OCI-LY7 (cell line): ENCODE measurements at regions of chr3 and their contacts with region 1.

Region 1: DNA sequence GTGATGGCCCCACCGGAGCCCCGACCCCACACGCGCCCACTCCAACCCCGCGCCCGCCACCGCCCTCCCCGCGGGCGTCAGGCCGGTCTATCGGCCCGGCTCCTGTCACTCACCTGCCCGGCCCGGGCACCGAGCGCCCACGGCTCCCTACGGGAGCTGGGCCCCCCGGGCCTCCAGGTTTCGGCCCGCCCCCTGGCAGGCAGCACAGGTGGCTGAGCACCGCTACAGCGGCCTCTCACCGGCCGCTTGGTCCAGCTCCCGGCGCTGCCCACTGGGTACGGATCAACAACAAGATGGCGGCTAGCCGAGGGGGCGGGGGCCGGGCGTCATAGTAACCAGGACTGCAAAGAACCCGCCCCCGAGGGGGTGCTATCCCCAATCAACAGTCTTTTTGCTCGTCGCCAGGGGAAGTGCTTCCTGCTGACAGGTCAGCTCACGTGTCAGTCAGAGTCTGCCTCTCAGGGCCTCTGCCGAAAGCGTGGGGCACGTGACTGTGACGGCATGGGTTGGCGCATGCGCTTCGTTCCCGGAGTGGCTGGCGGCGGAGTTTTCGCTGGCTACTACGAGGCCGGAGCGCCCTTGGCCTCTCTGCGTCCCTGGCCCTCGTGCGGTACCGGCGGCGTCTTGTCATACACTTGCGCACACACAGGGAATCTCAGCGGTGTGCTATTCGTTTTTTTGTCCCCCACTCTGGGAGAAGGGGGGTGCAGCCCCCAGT is at the start of gene IP6K1:
- DNase-seq: peak; percentile 100
- H3K4me3 ChIP-seq: peak within 1 kb of the TSS; percentile 82
- H3K27ac ChIP-seq: peak within 1 kb of the TSS; percentile 14
- H3K4me1 ChIP-seq: peaks cover 32% of the 10 kb centered on the region
- CTCF ChIP-seq: no peak
- total RNA-seq, gene IP6K1: 23.1 and 27.4 TPM in 2 replicates

Region 2: DNA sequence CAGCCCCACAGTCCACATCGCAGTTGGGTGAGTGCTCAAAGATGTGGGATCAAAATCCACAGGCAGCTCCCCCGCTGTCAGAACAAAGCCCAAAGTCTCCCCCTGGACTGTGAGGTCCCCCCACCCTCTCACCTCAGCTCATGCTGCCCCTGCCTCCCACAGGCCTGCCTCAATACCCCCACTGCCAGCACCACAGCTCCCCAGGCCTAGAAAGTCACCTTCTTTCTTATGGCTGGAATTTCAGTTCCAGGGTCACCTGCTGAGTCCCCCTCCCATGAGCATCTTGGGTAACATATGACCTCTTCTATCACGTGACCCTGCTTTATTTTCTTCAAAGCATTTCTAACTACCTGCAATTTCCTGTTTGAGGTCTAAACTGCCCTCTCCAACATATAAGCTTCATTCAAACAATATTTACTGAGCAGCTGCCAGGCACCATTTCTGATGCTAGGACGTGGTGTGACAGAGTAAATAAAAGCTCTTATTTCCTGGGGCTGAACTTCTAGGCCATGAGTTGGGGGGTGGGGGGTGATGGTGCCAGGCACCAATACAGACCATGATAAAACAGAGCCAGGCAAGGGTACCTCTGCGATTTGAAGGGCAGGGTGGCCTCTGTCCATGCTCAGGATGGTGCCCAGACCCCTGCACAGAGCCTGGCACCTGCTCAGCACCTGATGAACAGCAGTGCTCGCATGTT is 1162.4 kb before region 1 on chr3:
- CTCF ChIA-PET with region 1: no interaction called
- POLR2A ChIA-PET with region 1: no interaction called
- intact Hi-C with region 1: no loop called
- DNase-seq: peak; percentile 37
- H3K4me3 ChIP-seq: no peak overlapping the region
- H3K27ac ChIP-seq: no peak overlapping the region
- H3K4me1 ChIP-seq: peaks cover 9% of the 10 kb centered on the region
- CTCF ChIP-seq: no peak

Region 3: DNA sequence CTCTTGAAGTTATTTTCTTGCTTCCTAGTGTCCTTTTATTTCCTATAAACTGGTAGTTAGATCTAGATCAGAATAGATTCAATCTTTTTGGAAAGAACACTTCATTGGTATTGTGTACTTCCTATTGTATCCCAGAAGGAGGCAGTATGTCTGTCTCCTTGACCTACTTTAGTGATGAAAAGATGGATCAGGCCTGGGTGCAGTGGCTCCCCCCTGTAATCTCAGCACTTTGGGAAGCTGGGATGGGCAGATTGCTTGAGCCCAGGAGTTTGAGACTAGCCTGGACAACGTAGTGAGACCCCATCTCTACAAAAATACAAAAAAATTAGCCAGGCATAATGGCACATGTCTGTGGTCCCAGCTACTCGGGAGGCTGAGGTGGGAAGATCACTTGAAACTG is 220.1 kb before region 1 on chr3:
- CTCF ChIA-PET with region 1: no interaction called
- POLR2A ChIA-PET with region 1: no interaction called
- intact Hi-C with region 1: no loop called
- DNase-seq: no peak
- H3K4me3 ChIP-seq: no peak overlapping the region
- H3K27ac ChIP-seq: no peak overlapping the region
- H3K4me1 ChIP-seq: no peaks in the 10 kb centered on the region
- CTCF ChIP-seq: peak; percentile 65

Region 4: DNA sequence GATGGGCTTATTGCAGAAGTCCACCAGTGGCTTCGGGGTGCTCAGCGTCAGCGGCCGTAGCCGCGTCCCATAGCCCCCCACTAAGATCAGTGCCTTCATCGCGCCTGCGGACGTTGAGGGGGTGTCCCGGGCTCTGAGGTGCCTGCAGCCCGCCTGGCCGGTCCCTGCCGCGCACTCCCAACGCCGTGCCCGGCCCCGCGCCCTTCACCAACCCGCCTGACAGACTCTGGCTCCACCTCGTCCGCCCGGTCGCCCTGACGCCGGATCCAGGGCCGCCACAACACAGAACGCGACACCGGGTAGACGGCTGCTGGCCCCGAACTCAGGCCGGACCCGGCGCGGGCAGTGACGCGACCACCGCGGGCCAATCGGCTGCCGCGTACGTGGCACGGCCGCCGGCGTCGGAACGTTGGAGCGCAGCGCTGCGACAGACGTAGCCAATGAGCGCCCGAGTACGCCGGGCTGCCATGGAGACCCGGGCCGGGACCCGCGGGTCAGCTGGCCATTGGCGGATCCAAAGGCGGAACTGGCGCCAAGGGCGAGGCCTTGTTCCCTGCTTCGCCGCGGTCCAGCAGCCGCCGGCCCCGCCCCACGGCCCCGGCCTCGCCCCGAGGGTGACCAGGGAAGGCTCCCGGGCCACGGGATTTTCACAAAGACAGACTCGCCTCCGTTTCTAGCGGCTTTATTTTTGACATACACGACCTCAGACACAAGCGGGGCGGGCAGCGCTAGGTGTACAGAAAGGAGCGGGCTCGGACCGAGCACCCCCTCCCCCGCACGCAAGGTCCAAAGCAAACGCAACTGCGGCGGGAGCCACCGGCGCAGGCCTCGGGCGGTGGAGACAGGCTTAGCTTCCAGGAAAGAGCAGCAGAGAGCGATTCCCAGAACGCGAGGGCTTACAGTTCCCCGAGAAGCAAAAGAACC is 62.5 kb before region 1 on chr3 and contains the start of gene GMPPB:
- CTCF ChIA-PET with region 1: no interaction called
- POLR2A ChIA-PET with region 1: interaction called, 3 read pairs
- intact Hi-C with region 1: loop called (anchors 2 kb)
- DNase-seq: peak; percentile 98
- H3K4me3 ChIP-seq: peak within 1 kb of the TSS; percentile 93
- H3K27ac ChIP-seq: peak within 1 kb of the TSS; percentile 74
- H3K4me1 ChIP-seq: peaks cover 50% of the 10 kb centered on the region
- CTCF ChIP-seq: no peak
- total RNA-seq, gene GMPPB: 40.7 and 43.6 TPM in 2 replicates